ENCODE measurements at regions of chr11 and their contacts with region 1.

Region 1: GRCh38 chr11:14636119-14636518 is 7.5 kb upstream of the PDE3B start:
- DNase-seq: no peak
- H3K4me3 Mint-ChIP-seq: peak overlapping the region; percentile 31
- H3K27ac Mint-ChIP-seq: peak overlapping the region; percentile 50
- H3K4me1 Mint-ChIP-seq: peaks cover 62% of the 10 kb centered on the region
- H3K27me3 Mint-ChIP-seq: no peaks in the 10 kb centered on the region

Region 2: DNA sequence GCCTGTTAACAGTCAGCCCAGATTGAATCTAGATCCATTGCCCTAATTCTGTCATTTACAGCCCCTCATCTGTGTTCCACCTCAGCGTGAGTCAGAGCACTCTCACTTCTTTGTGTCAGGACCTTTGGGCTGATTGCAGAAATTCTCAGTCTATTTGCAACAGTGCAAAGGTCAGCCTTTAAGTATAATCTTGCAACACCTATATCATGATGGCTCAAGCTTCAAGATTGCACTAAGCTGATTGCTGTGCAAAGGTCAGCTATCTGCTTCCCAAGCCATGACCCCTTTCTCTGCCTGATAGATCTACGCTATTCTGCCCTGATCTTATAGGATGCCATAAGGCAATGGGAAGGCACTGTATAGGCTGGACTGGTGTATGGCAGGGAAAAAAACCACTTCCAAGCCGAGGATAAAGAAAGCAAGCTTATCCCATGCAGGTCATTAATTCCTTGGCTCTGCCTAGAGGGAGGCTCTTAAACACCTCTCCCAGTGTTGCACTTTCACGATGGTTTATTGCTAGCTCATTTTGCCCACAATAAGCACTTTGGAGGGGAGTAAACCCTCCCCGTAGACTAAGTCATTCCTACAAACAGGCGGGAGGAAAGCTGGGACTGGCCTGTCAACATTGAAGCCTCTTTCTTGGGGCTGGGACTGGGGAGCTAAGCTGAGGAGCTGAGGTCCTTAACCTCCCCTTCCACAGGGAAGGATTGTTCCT is 377.7 kb before region 1 on chr11:
- intact Hi-C with region 1: no loop called
- DNase-seq: no peak
- H3K4me3 Mint-ChIP-seq: no peak overlapping the region
- H3K27ac Mint-ChIP-seq: no peak overlapping the region
- H3K4me1 Mint-ChIP-seq: no peaks in the 10 kb centered on the region
- H3K27me3 Mint-ChIP-seq: no peaks in the 10 kb centered on the region

Region 3: GRCh38 chr11:14529933-14530332 is 106.2 kb before region 1 on chr11:
- intact Hi-C with region 1: no loop called
- DNase-seq: no peak
- H3K4me3 Mint-ChIP-seq: no peak overlapping the region
- H3K27ac Mint-ChIP-seq: no peak overlapping the region
- H3K4me1 Mint-ChIP-seq: no peaks in the 10 kb centered on the region
- H3K27me3 Mint-ChIP-seq: no peaks in the 10 kb centered on the region

Region 4: DNA sequence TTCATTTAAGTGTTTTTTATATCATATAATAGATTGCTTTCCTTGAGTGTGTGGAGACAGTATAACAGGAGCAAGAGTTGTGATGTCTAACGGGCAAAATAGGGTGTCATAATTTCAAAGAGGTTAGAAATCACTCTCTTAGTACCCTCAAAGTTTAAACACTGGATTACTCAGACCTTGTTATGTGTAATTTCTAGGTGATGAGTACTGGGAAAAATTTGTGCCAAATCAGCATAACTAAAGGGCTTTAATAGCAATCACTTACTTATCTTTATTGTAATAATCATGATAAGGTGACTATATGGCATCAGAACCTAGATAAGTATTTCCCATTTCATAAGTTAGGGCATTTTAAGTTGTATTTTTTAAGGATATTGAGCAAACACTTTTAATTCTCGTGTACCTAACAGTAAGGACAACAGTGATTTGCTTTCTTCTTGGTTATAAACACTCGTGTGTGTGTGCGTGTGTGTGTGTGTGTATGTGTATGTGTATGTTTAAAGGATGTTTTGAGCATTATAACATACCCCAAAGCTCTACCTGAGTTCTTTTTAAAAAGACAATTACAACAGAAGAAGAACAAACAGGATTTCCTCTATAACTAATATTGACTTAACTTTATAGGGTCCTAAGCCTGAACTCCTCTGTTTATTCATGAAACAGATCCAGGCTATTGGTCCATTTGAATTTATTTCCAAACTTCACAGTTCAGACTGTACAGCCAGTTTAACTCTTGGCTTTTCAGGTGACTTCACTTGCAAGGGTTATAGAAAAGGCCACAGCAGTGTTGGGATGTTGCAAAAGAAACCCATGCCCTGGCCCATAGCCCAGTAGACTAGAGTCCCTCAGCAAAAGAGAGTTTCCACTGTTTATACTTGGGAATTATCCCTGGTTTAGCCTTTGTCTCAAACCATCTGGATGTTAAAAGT is 16.3 kb before region 1 on chr11:
- intact Hi-C with region 1: loop called (anchors 2 kb)
- DNase-seq: no peak
- H3K4me3 Mint-ChIP-seq: no peak overlapping the region
- H3K27ac Mint-ChIP-seq: no peak overlapping the region
- H3K4me1 Mint-ChIP-seq: peaks cover 57% of the 10 kb centered on the region
- H3K27me3 Mint-ChIP-seq: no peaks in the 10 kb centered on the region